ENCODE measurements at regions of chr11 and their contacts with region 1.

Region 1: DNA sequence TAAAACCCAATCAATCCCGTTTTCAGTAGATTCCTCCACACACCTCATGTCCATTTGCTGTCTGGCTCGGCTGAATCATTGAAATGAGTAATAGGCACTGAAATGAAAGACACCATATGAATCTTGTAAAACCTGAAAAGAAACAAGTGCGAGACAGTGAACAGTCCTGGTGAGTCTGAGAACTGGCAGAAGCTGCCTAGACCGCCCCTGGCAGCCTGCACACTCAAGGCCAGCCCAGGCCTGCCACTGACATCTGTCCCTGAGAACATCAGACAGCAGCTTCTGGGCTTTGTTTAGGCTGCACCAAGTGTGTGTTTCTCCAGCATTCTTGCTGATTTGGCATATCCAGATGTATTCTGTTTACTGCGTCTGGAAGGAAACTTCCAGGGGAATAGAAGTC is 44.8 kb downstream of the ENDOD1 start:
- DNase-seq: peak; percentile 95
- ATAC-seq: peak; percentile 100
- H3K4me3 ChIP-seq: no peak overlapping the region; the same call in 1 of the 2 replicates
- H3K27ac ChIP-seq: peak overlapping the region; percentile 61
- H3K4me1 ChIP-seq: peaks cover 32% of the 10 kb centered on the region
- H3K27me3 ChIP-seq: no peaks in the 10 kb centered on the region
- CTCF ChIP-seq: no peak

Region 2: DNA sequence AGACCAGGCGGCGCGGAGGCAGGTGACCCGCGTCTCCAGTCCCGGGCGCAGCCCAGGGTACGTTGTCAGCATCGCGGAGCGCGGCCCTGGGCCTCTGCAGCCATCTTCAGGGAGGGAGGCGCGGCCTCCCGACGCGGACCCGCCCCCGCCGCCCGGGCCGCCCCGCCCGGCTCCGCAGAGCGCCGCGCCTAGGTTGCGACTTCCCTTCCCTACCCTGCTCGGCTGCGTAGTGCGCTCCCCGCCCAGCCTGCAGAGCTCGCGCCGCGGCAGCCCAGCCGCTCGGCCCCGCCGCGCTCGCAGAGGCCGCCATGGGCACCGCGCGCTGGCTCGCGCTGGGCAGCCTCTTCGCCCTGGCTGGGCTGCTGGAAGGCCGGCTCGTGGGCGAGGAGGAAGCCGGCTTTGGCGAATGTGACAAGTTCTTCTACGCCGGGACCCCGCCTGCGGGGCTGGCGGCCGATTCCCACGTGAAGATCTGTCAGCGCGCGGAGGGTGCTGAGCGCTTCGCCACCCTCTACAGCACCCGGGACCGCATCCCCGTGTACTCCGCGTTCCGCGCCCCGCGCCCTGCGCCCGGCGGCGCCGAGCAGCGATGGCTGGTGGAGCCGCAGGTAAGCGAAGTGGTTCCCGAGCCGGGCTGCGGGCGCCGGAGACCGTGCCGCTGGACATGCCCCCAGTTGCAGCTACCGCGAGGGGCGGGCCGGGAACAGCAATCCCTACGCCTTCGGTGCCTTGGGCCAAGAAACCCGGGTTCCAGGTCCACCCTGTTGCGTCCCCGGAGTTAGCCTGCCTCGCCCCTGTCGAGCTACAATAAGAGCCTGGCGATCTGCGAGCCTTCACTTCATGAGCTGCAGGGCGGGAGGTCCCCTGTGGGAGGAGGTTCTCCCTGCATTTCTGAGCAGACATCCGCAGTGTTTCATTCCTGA is 44.6 kb before region 1 on chr11 and contains the start of gene ENDOD1:
- CTCF ChIA-PET with region 1: interaction called, 3 read pairs
- POLR2A ChIA-PET with region 1: no interaction called
- intact Hi-C with region 1: loop called (anchors 1 kb)
- DNase-seq: peak; percentile 90
- ATAC-seq: peak; percentile 93
- H3K4me3 ChIP-seq: peak within 1 kb of the TSS; percentile 89
- H3K27ac ChIP-seq: no peak within 1 kb of the TSS
- H3K4me1 ChIP-seq: peaks cover 36% of the 10 kb centered on the region
- H3K27me3 ChIP-seq: no peaks in the 10 kb centered on the region
- CTCF ChIP-seq: peak; percentile 32; the same call in 1 of the 2 replicates
- total RNA-seq, gene ENDOD1: 28.5 and 32.1 TPM in 2 replicates